ENCODE measurements at regions of chr9 and their contacts with region 1.

Region 1: DNA sequence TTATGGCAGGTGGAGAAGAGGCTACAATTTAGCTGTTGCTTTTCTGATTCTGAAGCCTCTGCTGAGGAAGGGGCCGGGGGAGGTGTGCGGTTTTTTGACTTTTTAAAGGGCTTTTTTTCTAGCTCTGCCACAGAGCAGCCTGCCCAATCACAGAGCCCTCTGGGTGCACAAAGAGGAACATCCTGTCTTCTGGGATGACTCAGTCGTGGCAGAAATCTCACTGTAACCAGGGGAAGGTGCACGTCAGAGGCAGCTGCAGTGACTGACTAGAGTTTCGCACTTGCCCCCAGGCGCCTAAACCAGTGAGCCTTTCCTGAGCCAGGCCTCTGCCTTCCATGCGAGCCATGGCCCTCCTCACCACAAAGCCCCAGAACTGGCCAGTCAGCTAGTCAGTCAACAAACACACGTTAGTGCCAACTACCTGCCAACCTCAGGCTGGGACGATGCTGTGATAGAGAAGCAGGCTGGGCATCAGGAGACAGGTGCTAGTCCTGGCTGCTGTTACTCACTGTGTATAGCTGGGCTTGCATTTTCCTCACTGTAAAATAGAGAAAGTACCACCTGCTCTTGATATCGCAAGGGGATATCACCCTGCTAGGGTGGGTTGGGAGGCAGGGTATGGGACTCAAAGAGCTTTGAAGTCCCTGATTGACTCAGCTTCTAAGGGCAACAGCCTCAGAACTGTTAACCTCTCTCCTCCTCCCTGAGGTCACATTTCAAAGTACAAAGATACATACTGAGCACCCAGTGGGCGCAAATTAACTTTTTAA is 2.2 kb downstream of the AKNA start:
- DNase-seq: peak; percentile 95
- H3K4me3 ChIP-seq: peak overlapping the region; percentile 76
- H3K27ac ChIP-seq: peak overlapping the region; percentile 97
- H3K4me1 ChIP-seq: peaks cover 70% of the 10 kb centered on the region
- CTCF ChIP-seq: peak; percentile 17; the same call in 1 of the 2 replicates

Region 2: DNA sequence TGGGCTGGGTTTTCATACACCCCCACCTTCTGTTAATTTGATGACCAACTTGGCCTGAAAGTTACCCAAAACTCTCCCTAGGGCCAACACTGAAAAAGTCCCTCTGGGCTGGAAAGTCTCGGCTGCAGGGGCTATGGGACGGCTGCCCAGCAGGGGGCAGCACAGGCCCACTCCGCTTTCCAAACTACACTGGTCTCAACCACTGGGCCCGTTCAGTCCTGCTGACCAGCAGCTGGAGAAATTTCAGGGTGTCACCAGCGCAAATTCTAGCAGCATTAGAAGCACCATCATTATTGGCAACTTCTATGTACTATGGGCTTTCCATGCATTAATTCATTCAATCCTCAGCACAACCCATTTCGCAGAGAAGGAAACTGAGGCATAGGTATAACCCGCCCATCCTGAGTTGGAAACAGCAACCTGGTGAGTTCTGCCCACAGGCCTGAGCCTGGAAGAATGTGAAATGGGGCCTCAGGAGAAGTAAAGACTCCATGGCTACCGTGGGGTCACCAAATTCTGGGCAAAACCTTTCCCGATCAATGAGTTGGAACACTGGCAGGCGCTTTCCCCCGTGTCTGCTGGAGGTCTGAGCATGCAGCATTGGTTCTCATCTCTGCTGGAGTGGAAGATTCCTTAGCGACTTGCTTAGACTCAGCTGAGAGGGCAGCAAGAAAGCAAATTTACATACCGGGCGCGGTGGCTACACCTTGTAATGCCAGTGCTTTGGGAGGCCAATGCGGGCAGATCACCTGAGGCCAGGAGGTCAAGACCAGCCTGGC is 46.3 kb before region 1 on chr9:
- CTCF ChIA-PET with region 1: interaction called, 4 read pairs
- POLR2A ChIA-PET with region 1: interaction called, 6 read pairs
- intact Hi-C with region 1: loop called (anchors 1 kb)
- DNase-seq: peak; percentile 71
- H3K4me3 ChIP-seq: no peak overlapping the region
- H3K27ac ChIP-seq: no peak overlapping the region
- H3K4me1 ChIP-seq: peaks cover 4% of the 10 kb centered on the region
- CTCF ChIP-seq: peak; percentile 99

Region 3: GRCh38 chr9:114366334-114367128 is 19.1 kb before region 1 on chr9:
- CTCF ChIA-PET with region 1: interaction called, 15 read pairs
- POLR2A ChIA-PET with region 1: interaction called, 275 read pairs
- intact Hi-C with region 1: loop called (anchors 1 kb)
- DNase-seq: peak; percentile 68
- H3K4me3 ChIP-seq: peak overlapping the region; percentile 53
- H3K27ac ChIP-seq: peak overlapping the region; percentile 99
- H3K4me1 ChIP-seq: peaks cover 88% of the 10 kb centered on the region
- CTCF ChIP-seq: no peak

Region 4: GRCh38 chr9:114372921-114373448 is 12.6 kb before region 1 on chr9:
- CTCF ChIA-PET with region 1: interaction called, 15 read pairs
- POLR2A ChIA-PET with region 1: interaction called, 275 read pairs
- intact Hi-C with region 1: loop called (anchors 1 kb)
- DNase-seq: peak; percentile 99
- H3K4me3 ChIP-seq: peak overlapping the region; percentile 56
- H3K27ac ChIP-seq: peak overlapping the region; percentile 99
- H3K4me1 ChIP-seq: peaks cover 94% of the 10 kb centered on the region
- CTCF ChIP-seq: no peak

Region 5: GRCh38 chr9:114397848-114398605 is 12.4 kb after region 1 on chr9:
- CTCF ChIA-PET with region 1: interaction called, 8 read pairs
- POLR2A ChIA-PET with region 1: interaction called, 40 read pairs
- intact Hi-C with region 1: loop called (anchors 1 kb)
- DNase-seq: peak; percentile 97
- H3K4me3 ChIP-seq: peak overlapping the region; percentile 76
- H3K27ac ChIP-seq: peak overlapping the region; percentile 97
- H3K4me1 ChIP-seq: peaks cover 56% of the 10 kb centered on the region
- CTCF ChIP-seq: no peak

Region 6: GRCh38 chr9:114525505-114525904 is 139.9 kb after region 1 on chr9:
- CTCF ChIA-PET with region 1: no interaction called
- POLR2A ChIA-PET with region 1: no interaction called
- intact Hi-C with region 1: no loop called
- DNase-seq: no peak
- H3K4me3 ChIP-seq: no peak overlapping the region
- H3K27ac ChIP-seq: no peak overlapping the region
- H3K4me1 ChIP-seq: no peaks in the 10 kb centered on the region
- CTCF ChIP-seq: no peak

Region 7: GRCh38 chr9:114611516-114612271 is 226.1 kb after region 1 on chr9:
- CTCF ChIA-PET with region 1: no interaction called
- POLR2A ChIA-PET with region 1: interaction called, 11 read pairs
- intact Hi-C with region 1: no loop called
- DNase-seq: peak; percentile 62
- H3K4me3 ChIP-seq: peak overlapping the region; percentile 95
- H3K27ac ChIP-seq: peak overlapping the region; percentile 86
- H3K4me1 ChIP-seq: peaks cover 72% of the 10 kb centered on the region
- CTCF ChIP-seq: no peak